ENCODE measurements at regions of chr17 and their contacts with region 1.

Region 1: DNA sequence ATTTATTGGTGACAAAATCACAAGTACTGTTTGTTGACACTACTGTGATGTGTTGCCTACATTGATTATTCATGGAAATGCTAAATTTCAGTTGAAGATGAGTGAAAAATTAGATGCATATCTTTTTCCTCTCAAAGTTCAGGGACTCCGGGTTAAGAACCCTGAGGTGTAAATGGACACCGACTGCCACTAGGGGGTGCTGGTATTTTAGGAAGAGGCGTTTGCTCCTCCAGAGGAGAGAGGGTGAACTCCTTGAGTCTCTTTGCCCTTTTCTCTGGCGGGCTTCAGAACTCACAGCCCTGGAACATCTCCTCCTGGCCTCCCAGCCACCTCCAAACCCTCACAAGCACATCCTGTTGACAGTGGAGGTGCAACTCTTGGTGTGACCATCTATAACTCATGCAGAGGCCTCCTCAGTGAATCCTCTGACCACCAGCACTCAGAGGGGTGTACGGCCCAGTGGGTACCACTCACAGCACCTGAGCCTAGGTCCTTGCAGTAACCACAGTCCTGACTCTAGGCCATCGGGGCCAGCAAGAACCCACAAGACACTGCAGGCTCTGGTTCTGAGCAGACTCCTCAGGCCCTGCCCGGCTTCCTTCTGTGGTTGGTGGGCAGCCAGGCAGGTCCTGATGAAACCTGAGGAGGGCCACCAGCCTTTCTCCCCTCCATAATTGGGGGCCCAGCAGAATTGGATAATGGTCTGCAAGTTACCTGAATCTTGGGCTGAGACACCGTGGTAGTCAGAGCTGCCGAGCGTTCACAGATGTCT is 26.2 kb upstream of the PIK3R5 start:
- DNase-seq: peak; percentile 24
- ATAC-seq: peak; percentile 59; the same call in 2 of the 3 replicates
- H3K4me3 ChIP-seq: no peak overlapping the region
- H3K27ac ChIP-seq: no peak overlapping the region
- H3K4me1 ChIP-seq: no peaks in the 10 kb centered on the region
- H3K27me3 ChIP-seq: 0 out of 5 replicates have a peak, but pooled peaks cover 0 to 4% of the 10 kb centered on the region in 2 experiments
- CTCF ChIP-seq: peak; percentile 67
- EP300 ChIP-seq: no peak
- POLR2A ChIP-seq: no peak
- RAD21 ChIP-seq: no peak

Region 2: DNA sequence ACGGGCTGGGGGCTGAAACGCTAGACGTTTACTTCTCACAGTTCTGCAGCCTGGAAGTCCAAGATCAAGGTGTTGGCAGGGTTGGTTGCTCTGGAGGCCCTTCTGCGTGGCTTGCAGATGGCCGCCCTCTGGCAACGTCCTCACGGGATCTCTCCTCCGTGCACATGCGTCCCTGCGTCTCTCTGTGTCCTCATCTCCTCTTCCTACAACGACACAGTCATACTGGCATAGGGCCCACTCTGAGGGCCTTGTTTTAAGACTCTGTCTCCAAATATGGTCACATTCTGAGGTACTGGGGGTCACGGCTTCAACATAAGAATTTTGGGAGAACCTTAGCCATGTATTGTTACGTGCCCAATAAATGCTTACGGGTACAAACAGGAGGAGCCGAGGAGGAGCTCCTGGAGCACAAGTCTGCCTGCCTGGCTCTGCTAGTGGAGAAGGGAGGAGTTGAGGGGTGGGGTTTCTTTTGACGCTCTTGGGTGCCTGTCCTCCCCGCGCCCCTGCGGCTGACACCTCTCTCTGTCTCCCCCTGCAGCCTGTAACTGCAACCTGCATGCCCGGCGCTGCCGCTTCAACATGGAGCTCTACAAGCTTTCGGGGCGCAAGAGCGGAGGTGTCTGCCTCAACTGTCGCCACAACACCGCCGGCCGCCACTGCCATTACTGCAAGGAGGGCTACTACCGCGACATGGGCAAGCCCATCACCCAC is 170.7 kb after region 1 on chr17:
- CTCF ChIA-PET with region 1: no interaction called
- POLR2A ChIA-PET with region 1: no interaction called
- in situ Hi-C with region 1: no loop called
- intact Hi-C with region 1: loop called (anchors 10 kb)
- DNase-seq: no peak
- ATAC-seq: peak; percentile 60
- H3K4me3 ChIP-seq: no peak overlapping the region
- H3K27ac ChIP-seq: no peak overlapping the region
- H3K4me1 ChIP-seq: peaks cover 8% of the 10 kb centered on the region; the same call in 1 of the 2 replicates
- H3K27me3 ChIP-seq: peaks cover 2 to 52% of the 10 kb centered on the region in 2 experiments
- CTCF ChIP-seq: peak; percentile 43
- EP300 ChIP-seq: no peak
- POLR2A ChIP-seq: no peak
- RAD21 ChIP-seq: no peak

Region 3: GRCh38 chr17:9291912-9292560 is 300.3 kb after region 1 on chr17:
- CTCF ChIA-PET with region 1: interaction called, 3 read pairs
- POLR2A ChIA-PET with region 1: no interaction called
- in situ Hi-C with region 1: loop called (anchors 25 kb)
- intact Hi-C with region 1: no loop called
- DNase-seq: peak; percentile 8
- ATAC-seq: peak; percentile 92
- H3K4me3 ChIP-seq: no peak overlapping the region
- H3K27ac ChIP-seq: no peak overlapping the region
- H3K4me1 ChIP-seq: no peaks in the 10 kb centered on the region
- H3K27me3 ChIP-seq: no peaks in the 10 kb centered on the region
- CTCF ChIP-seq: peak; percentile 78
- EP300 ChIP-seq: no peak
- POLR2A ChIP-seq: no peak
- RAD21 ChIP-seq: peak; percentile 64; the same call in 1 of the 2 replicates

Region 4: DNA sequence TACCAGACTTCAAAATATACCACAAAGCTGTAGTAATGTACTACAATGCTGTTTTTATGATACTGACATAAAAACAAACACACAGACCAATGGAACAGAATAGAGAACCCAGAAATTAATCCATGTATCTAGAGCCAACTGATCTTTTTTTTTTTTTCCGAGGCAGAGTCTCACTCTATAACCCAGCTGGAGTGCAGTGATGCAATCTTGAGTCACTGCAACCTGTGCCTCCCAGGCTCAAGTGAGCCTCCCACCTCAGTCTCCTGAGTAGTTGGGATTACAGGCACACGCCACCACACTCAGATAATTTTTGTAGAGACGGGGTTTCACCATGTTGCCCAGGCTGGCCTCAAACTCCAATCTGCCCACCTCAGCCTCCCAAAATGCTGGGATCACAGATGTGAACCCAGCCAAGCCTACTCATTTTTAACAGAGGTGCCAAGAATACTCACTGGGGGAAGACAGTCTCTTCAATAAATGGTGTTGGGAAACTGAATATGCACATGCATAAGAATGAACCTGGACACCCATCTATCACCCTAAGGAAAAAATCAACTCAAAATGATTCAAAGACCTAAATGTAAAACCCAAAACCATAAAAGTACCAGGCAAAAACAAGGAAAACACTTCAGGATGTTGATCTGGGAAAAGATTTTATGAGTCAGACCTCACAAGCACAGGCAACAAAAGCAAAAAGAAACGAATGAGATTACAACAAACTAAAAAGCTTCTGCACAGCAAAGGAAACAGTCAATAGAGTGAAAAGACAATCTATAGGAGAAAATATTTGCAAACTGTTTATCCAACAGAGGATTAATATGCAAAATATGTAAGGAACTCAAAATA is 520.8 kb after region 1 on chr17:
- CTCF ChIA-PET with region 1: no interaction called
- POLR2A ChIA-PET with region 1: no interaction called
- in situ Hi-C with region 1: loop called (anchors 10 kb)
- intact Hi-C with region 1: no loop called
- DNase-seq: no peak
- ATAC-seq: no peak
- H3K4me3 ChIP-seq: no peak overlapping the region
- H3K27ac ChIP-seq: no peak overlapping the region
- H3K4me1 ChIP-seq: no peaks in the 10 kb centered on the region
- H3K27me3 ChIP-seq: no peaks in the 10 kb centered on the region
- CTCF ChIP-seq: no peak
- EP300 ChIP-seq: no peak
- POLR2A ChIP-seq: no peak
- RAD21 ChIP-seq: no peak

Region 5: GRCh38 chr17:9522074-9522473 is 530.4 kb after region 1 on chr17:
- CTCF ChIA-PET with region 1: no interaction called
- POLR2A ChIA-PET with region 1: no interaction called
- in situ Hi-C with region 1: loop called (anchors 10 kb)
- intact Hi-C with region 1: loop called (anchors 1 kb)
- DNase-seq: peak; percentile 44
- ATAC-seq: peak; percentile 64
- H3K4me3 ChIP-seq: no peak overlapping the region
- H3K27ac ChIP-seq: no peak overlapping the region
- H3K4me1 ChIP-seq: no peaks in the 10 kb centered on the region
- H3K27me3 ChIP-seq: no peaks in the 10 kb centered on the region
- CTCF ChIP-seq: peak; percentile 73
- EP300 ChIP-seq: no peak
- POLR2A ChIP-seq: no peak
- RAD21 ChIP-seq: peak; percentile 53; the same call in 1 of the 2 replicates